Right ventricle myocardium superior (tissue), 1 donor: ENCODE measurements at regions of chr12 and their contacts with region 1.

Region 1: DNA sequence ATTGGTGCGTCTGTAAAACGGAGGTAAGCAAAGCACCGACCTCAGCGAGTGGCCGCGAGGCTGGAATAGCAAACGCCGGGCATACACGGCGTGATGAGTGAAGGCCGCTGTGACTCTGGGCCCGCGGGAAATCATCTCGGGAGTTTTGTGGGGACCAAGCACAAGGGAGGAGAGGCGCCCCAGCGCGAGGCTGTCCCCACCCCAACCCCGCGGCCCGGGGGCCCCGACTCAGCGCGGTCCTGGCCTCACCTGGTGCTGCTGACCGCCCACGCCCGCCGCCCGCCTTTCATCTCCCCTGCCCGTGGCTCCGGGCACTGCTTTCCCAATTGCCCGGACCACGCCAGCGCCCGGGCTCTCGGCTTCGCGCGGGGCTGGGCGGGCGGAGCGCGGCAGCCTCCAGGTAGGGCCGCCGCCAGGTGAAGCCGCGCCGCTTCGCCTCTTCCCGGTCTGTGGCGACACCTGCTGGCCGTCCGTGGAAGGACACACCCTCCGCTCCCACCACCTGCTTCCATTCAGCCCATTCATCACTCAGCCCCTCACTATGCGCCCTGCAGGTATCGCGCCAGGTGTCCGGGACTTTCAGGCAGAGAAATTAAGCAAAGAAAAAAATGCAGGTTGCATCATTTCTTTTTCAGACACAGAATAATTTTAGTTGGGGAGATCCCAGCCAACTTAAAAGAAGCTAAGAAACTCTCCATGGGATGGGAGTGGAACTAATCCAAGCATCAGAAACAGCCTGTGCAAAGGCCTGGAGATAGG is 360.4 kb downstream of the MED13L start:
- DNase-seq: peak; percentile 73
- ATAC-seq: peak; percentile 87

Region 2: GRCh38 chr12:114662512-114663177 is 1254.4 kb before region 1 on chr12:
- intact Hi-C with region 1: loop called (anchors 2 kb)
- DNase-seq: peak; percentile 80
- ATAC-seq: peak; percentile 68

Region 3: GRCh38 chr12:115752913-115753726 is 164.0 kb before region 1 on chr12:
- intact Hi-C with region 1: loop called (anchors 5 kb)
- DNase-seq: no peak
- ATAC-seq: peak; percentile 92

Region 4: DNA sequence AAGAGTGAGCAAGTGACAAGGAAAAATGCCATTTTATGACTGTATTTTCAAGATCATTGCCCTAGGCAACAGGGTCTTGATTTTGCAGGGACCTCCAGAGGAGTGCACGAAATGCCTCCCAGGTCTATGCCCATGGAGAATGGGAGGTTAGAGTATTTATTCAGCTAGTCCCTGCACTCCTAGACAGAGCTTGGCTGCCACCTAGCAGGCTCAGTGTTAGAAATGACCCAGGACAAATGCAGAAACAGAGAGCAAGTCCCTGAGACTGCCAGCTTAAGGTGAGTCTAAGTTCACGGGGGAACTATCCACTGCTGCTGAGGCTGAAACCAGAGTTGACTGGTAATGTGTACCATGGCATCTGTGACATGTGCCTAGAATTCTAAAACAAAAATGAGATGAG is 146.0 kb before region 1 on chr12:
- intact Hi-C with region 1: no loop called
- DNase-seq: no peak
- ATAC-seq: peak; percentile 52